GM12878 (cell line): ENCODE measurements at regions of chr6 and their contacts with region 1.

Region 1: DNA sequence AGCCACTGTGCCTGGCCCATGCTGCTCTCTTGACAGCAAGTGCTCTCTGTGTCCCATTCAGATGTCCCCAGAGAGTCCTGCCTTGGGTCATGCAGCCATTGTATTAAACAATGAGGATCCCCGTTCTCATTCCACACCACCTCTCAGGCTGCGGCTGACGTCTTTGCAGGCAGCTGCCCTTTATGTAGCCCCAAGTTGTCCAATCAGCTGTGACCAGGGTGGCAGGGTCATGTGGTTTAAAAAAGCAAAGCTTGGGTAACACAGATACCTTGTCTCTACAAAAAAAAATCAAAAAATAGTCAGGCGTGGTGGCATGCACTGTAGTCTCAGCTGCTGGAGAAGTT is 13.2 kb downstream of the GCNT2 start:
- DNase-seq: no peak
- ATAC-seq: peak; percentile 48
- H3K4me3 ChIP-seq: peak overlapping the region; percentile 64; the same call in 1 of the 2 replicates
- H3K27ac ChIP-seq: peak overlapping the region; percentile 72
- H3K4me1 ChIP-seq: peaks cover 18% of the 10 kb centered on the region
- H3K27me3 ChIP-seq: no peaks in the 10 kb centered on the region
- CTCF ChIP-seq: no peak
- EP300 ChIP-seq: no peak
- POLR2A ChIP-seq: 0 out of 2 replicates have a peak, but pooled peaks have one; percentile 23
- RAD21 ChIP-seq: no peak

Region 2: GRCh38 chr6:10561611-10562199 is 27.3 kb after region 1 on chr6:
- CTCF ChIA-PET with region 1: no interaction called
- POLR2A ChIA-PET with region 1: no interaction called
- RAD21 ChIA-PET with region 1: no interaction called
- SMC1A ChIA-PET with region 1: no interaction called
- in situ Hi-C with region 1: no loop called
- intact Hi-C with region 1: no loop called
- DNase-seq: no peak
- ATAC-seq: no peak
- H3K4me3 ChIP-seq: no peak overlapping the region
- H3K27ac ChIP-seq: no peak overlapping the region
- H3K4me1 ChIP-seq: no peaks in the 10 kb centered on the region; the same call in 1 of the 2 replicates
- H3K27me3 ChIP-seq: no peaks in the 10 kb centered on the region
- CTCF ChIP-seq: no peak
- EP300 ChIP-seq: no peak
- POLR2A ChIP-seq: no peak
- RAD21 ChIP-seq: no peak

Region 3: GRCh38 chr6:10722820-10723566 is 188.6 kb after region 1 on chr6 and contains the start of gene TMEM14C:
- CTCF ChIA-PET with region 1: no interaction called
- POLR2A ChIA-PET with region 1: no interaction called
- RAD21 ChIA-PET with region 1: interaction called, 5 read pairs
- SMC1A ChIA-PET with region 1: interaction called, 5 read pairs
- in situ Hi-C with region 1: no loop called
- intact Hi-C with region 1: loop called (anchors 10 kb)
- DNase-seq: peak; percentile 71
- ATAC-seq: peak; percentile 99
- H3K4me3 ChIP-seq: peak within 1 kb of the TSS; percentile 97
- H3K27ac ChIP-seq: peak within 1 kb of the TSS; percentile 63
- H3K4me1 ChIP-seq: peaks cover 4% of the 10 kb centered on the region
- H3K27me3 ChIP-seq: no peaks in the 10 kb centered on the region
- CTCF ChIP-seq: no peak
- EP300 ChIP-seq: peak; percentile 7 to 36; a peak in 1 of 4 replicates
- POLR2A ChIP-seq: peak; percentile 85
- RAD21 ChIP-seq: no peak
- polyA plus RNA-seq, gene TMEM14C: 169 to 224 TPM